ENCODE measurements at regions of chr11 and their contacts with region 1.

Region 1: DNA sequence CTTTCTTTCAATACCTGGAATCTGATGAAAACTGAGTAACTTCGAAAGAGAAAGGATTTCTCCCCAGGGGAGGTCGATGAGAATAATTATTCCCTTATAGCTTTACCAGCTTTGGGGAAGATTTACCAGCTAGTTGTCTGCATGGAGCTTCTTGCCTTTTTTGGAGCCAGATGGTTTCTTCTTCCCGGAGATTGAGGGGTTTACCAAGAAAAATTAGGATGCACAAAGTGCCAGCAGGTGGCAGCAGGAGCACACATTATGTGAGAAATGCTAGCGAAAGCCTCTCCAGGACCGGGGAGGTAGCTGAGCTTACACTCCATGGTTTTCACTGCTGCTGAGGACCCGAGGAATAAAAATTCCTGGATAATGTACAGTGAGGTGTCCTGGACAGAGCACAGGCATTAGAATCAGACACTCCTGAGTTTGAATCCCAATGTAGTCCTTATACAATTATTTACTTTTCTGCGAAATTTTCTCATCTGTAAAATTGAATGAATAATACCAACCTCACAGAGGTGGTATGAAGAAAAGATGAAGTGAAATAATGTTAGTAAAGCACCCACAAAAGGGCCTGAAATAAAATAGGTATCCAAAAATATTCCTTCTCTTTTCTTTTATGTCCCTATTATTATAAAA is 46.0 kb upstream of the PARVA start:
- DNase-seq: peak; percentile 56 to 83 (median 66)
- ATAC-seq: peak; percentile 29
- H3K4me3 ChIP-seq: no peak overlapping the region
- H3K4me3 Mint-ChIP-seq: no peak overlapping the region
- H3K27ac ChIP-seq: no peak overlapping the region
- H3K27ac Mint-ChIP-seq: no peak overlapping the region
- H3K4me1 ChIP-seq: peaks cover 4% of the 10 kb centered on the region
- H3K4me1 Mint-ChIP-seq: peaks cover 11% of the 10 kb centered on the region
- H3K27me3 ChIP-seq: no peaks in the 10 kb centered on the region
- H3K27me3 Mint-ChIP-seq: no peaks in the 10 kb centered on the region
- CTCF ChIP-seq: peak; percentile 89

Region 2: GRCh38 chr11:12411806-12412727 is 80.7 kb after region 1 on chr11:
- CTCF ChIA-PET with region 1: no interaction called
- POLR2A ChIA-PET with region 1: no interaction called
- intact Hi-C with region 1: loop called in 1 of 2 experiments (anchors 5 kb)
- DNase-seq: peak in 8 of 14 experiments; percentile 2 to 44 (median 10)
- ATAC-seq: peak; percentile 46
- H3K4me3 ChIP-seq: no peak overlapping the region
- H3K4me3 Mint-ChIP-seq: no peak overlapping the region
- H3K27ac ChIP-seq: no peak overlapping the region
- H3K27ac Mint-ChIP-seq: no peak overlapping the region
- H3K4me1 ChIP-seq: no peaks in the 10 kb centered on the region
- H3K4me1 Mint-ChIP-seq: no peaks in the 10 kb centered on the region
- H3K27me3 ChIP-seq: peaks cover 2 to 5% of the 10 kb centered on the region in 2 experiments
- H3K27me3 Mint-ChIP-seq: peaks cover 14% of the 10 kb centered on the region
- CTCF ChIP-seq: peak; percentile 48

Region 3: DNA sequence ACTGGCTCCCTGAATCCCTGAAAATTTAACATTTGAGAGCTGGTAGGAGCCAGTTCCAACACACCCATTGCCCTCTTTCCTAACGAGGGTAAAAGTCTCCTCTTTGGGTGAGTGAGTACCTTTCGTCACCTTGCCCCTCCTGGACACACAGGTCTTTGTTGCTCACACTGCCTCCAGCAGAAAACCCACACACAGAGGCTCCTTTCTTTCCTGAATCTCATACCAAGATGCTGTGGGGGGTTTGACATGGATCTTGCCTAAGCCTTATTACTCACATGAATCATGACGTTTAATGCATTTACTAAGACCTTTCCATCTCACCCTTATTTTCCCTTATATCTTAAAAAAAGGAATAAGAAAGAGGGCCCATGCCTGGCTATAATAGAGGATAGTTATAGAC is 99.0 kb after region 1 on chr11:
- CTCF ChIA-PET with region 1: no interaction called
- POLR2A ChIA-PET with region 1: no interaction called
- intact Hi-C with region 1: no loop called
- DNase-seq: no peak
- ATAC-seq: no peak
- H3K4me3 ChIP-seq: no peak overlapping the region
- H3K4me3 Mint-ChIP-seq: no peak overlapping the region
- H3K27ac ChIP-seq: no peak overlapping the region
- H3K27ac Mint-ChIP-seq: no peak overlapping the region
- H3K4me1 ChIP-seq: no peaks in the 10 kb centered on the region
- H3K4me1 Mint-ChIP-seq: no peaks in the 10 kb centered on the region
- H3K27me3 ChIP-seq: no peaks in the 10 kb centered on the region
- H3K27me3 Mint-ChIP-seq: peaks cover 3% of the 10 kb centered on the region
- CTCF ChIP-seq: no peak

Region 4: DNA sequence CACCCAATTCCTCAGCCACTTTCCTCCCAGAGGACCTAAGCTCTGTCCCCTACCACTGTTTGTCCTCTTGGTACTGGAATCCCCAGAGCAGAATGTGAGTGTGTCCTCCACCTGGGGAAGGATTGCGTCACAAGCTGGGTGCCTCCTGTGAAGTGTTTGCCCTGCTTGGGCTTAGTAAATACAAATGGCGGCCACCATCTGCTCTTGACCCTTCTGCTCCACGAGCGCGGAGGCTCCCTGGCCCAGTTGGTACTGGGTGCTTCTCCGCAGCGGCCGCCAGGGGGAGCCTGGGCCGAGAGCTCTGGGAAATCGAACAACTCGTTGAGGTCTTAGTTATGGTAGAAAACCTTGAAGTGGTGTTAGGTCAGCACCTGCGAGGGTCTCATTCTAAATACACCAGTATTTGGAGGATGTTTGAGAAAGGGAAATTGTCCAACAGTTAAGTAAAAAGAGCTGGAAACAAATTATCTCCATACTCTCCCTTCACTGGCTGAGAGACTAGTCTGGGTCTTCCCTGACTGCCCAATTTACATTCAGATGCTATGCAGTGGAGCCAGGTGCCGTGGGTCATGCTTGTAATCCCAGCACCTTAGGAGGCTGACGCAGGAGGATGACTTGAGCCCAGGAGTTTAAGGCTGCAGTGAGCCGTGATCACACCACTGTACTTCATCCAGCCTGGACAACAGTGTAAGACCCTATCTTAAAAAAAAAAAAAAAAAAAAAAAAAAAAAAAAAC is 268.2 kb after region 1 on chr11:
- CTCF ChIA-PET with region 1: no interaction called
- POLR2A ChIA-PET with region 1: no interaction called
- intact Hi-C with region 1: loop called in 1 of 2 experiments (anchors 5 kb)
- DNase-seq: peak in 10 of 14 experiments; percentile 4 to 45 (median 18)
- ATAC-seq: no peak
- H3K4me3 ChIP-seq: no peak overlapping the region
- H3K4me3 Mint-ChIP-seq: no peak overlapping the region
- H3K27ac ChIP-seq: no peak overlapping the region
- H3K27ac Mint-ChIP-seq: no peak overlapping the region
- H3K4me1 ChIP-seq: peaks cover 16% of the 10 kb centered on the region
- H3K4me1 Mint-ChIP-seq: peaks cover 20% of the 10 kb centered on the region
- H3K27me3 ChIP-seq: peaks cover 0 to 5% of the 10 kb centered on the region in 2 experiments
- H3K27me3 Mint-ChIP-seq: peaks cover 34% of the 10 kb centered on the region
- CTCF ChIP-seq: peak; percentile 77

Region 5: DNA sequence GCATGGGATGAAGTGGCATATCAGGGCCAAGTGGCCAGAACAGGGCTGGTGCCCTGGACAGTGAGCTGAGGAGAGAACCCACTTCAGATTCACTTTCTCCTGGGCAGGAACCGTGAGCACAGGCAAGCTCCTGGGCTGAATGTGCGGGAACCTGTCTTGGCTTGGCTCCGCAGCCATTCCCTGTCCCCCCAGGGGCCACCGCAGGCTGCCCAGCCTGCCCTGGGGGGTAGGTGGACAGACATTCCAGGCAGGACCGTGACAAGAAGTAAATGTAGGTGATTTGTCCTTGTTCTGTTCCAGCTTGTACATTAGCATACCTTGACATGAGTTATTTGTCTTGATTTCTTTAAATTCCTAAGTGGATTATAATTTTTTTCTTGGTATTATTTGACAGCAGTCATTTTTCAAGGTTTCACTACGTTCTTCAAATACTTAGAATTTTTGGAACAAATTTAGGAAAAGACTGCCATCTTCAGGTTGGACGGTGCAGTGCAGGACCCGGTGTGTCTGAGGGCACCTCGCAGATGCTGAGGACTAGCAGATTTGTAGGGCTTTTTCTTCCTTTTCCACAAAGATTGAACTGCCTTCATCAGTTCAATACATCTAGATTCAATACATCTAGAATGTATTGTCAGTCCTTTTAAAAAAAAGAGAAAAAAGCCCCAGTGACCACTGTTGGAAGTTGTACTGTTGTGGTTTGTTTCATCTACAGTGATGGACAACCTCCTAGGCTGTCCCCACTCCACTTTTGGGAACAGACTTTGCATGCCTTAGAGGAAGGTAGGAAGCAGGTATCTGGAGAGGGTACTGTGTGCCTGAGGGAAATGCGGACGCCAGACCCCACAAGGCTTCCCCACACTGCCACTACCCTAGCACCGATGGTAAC is 562.7 kb after region 1 on chr11:
- CTCF ChIA-PET with region 1: interaction called, 31 read pairs
- POLR2A ChIA-PET with region 1: interaction called, 12 read pairs
- intact Hi-C with region 1: loop called (anchors 1 kb)
- DNase-seq: peak; percentile 9 to 64 (median 30)
- ATAC-seq: peak; percentile 71
- H3K4me3 ChIP-seq: no peak overlapping the region
- H3K4me3 Mint-ChIP-seq: no peak overlapping the region
- H3K27ac ChIP-seq: no peak overlapping the region
- H3K27ac Mint-ChIP-seq: no peak overlapping the region
- H3K4me1 ChIP-seq: no peaks in the 10 kb centered on the region
- H3K4me1 Mint-ChIP-seq: no peaks in the 10 kb centered on the region
- H3K27me3 ChIP-seq: peaks cover 9 to 13% of the 10 kb centered on the region in 2 experiments
- H3K27me3 Mint-ChIP-seq: peaks cover 18% of the 10 kb centered on the region
- CTCF ChIP-seq: peak; percentile 71

Region 6: DNA sequence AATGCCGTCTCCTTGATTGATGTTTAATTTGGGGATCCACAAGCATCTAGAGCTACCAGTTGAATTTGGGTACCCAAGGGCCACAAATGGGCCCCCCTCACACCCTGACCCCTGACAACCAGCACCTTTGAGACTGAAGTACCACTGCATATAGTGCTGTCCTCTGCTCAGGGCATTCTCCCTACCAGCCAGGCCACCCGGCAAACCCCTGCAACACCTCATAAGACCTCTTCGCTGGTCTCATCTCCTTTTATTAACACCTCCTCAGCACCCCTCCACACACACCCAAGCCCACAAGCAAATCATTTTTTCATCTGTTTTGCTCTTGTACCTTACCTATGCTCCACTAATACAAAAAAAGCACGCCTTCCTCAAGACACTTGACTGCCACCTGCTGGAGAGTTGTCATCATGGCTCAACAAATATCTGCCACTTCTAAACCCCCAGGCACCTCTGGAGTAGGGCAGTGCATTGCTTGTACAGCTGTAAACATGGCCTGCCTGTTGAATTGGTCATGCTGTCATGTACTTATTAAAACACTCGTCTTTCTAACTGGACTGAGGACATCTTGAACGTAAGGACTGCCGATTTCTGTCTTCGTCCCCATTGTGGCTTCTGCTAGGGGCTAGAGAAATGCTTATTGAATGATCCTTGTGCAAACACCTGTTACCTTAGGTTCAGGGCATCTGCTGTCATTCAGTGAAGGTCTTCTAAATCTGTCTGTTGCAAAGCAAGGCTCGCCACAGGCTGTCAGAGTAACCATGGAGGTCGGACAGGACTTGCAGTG is 1012.8 kb after region 1 on chr11:
- CTCF ChIA-PET with region 1: no interaction called
- POLR2A ChIA-PET with region 1: no interaction called
- intact Hi-C with region 1: loop called (anchors 1 to 5 kb)
- DNase-seq: peak; percentile 54 to 84 (median 68)
- ATAC-seq: peak; percentile 72
- H3K4me3 ChIP-seq: no peak overlapping the region
- H3K4me3 Mint-ChIP-seq: no peak overlapping the region
- H3K27ac ChIP-seq: no peak overlapping the region
- H3K27ac Mint-ChIP-seq: peak overlapping the region; percentile 0
- H3K4me1 ChIP-seq: peaks cover 42% of the 10 kb centered on the region
- H3K4me1 Mint-ChIP-seq: peaks cover 63% of the 10 kb centered on the region
- H3K27me3 ChIP-seq: no peaks in the 10 kb centered on the region
- H3K27me3 Mint-ChIP-seq: no peaks in the 10 kb centered on the region
- CTCF ChIP-seq: peak; percentile 85

Region 7: DNA sequence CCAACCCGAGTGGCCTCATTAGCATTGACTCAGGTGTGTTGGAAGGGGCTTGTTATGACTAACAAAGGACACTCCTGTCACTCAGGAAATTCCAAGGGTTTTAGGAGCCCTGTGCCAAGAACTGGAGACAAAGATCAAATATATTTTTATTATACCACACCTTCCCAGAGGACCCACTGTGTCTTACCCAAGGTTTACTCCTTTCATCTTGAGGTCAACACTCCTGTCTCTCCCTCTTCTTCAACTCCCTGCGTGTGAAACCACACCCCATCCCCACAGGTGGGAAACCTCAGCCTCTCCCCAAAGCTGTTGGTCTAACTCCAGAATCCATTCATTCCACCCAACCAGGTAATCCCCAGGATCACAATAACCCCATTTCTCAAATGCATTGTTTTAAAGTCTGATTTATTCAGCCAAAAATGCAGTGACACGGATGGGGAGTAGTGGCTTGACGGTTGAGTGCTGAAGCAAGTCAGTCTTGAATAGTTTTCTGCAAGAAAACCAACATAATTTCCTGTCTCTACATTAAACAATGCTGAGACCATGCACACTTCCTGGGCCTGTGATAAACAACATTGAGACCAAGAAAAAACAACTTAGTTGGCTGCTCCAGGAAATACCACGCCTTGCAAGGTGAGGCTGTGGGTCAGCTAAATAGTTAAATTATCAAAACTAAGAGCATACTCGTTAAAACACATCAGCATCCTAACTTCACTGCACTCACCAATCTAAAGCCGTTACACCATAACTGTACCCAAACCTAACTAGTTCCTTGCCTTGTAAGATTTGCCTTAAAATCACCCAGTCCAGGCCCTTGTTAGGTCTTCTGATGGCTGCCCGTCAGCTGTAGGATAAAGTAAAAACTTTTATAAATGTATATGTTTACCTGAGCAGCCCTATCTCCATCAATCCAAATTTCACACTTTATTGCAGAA is 1592.6 kb after region 1 on chr11:
- CTCF ChIA-PET with region 1: no interaction called
- POLR2A ChIA-PET with region 1: no interaction called
- intact Hi-C with region 1: no loop called
- DNase-seq: peak in 12 of 14 experiments; percentile 3 to 77 (median 25)
- ATAC-seq: peak; percentile 90
- H3K4me3 ChIP-seq: peak overlapping the region; percentile 17
- H3K4me3 Mint-ChIP-seq: peak overlapping the region; percentile 83
- H3K27ac ChIP-seq: peak overlapping the region; percentile 42 to 87
- H3K27ac Mint-ChIP-seq: peak overlapping the region; percentile 95
- H3K4me1 ChIP-seq: peaks cover 47% of the 10 kb centered on the region
- H3K4me1 Mint-ChIP-seq: peaks cover 70% of the 10 kb centered on the region
- H3K27me3 ChIP-seq: no peaks in the 10 kb centered on the region
- H3K27me3 Mint-ChIP-seq: no peaks in the 10 kb centered on the region
- CTCF ChIP-seq: no peak

Measured in CD4-positive, alpha-beta T cell (primary cell).